ENCODE measurements at regions of chr4 and their contacts with region 1.

Region 1: GRCh38 chr4:175253184-175253902 is 335.2 kb downstream of the ADAM29 start:
- DNase-seq: peak in 1 of 2 experiments; percentile 9
- H3K4me3 ChIP-seq: no peak overlapping the region
- H3K4me3 Mint-ChIP-seq: no peak overlapping the region
- H3K27ac Mint-ChIP-seq: no peak overlapping the region
- H3K4me1 ChIP-seq: no peaks in the 10 kb centered on the region
- H3K4me1 Mint-ChIP-seq: no peaks in the 10 kb centered on the region
- H3K27me3 ChIP-seq: no peaks in the 10 kb centered on the region
- H3K27me3 Mint-ChIP-seq: no peaks in the 10 kb centered on the region
- CTCF ChIP-seq: peak in 1 of 2 experiments; percentile 32

Region 2: DNA sequence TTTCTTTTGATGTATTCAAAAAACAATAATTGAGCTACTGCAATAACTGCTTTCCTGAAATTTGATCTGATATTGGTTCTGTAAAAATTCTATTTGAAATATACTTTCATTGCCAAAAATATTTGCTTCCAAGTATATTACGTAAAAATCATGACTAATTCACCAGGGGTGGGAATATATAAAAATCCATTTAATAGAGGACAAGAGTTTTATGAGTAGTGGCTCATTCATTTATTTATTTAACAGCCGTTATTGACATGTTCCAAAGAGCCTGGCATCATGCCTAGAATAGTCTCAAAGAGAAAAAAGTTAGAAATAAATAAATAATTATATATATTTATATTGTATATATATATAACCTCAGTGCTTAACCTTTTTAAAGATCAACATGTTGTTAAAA is 458.6 kb before region 1 on chr4:
- CTCF ChIA-PET with region 1: no interaction called
- POLR2A ChIA-PET with region 1: no interaction called
- intact Hi-C with region 1: no loop called
- DNase-seq: no peak
- H3K4me3 ChIP-seq: no peak overlapping the region
- H3K4me3 Mint-ChIP-seq: no peak overlapping the region
- H3K27ac Mint-ChIP-seq: no peak overlapping the region
- H3K4me1 ChIP-seq: no peaks in the 10 kb centered on the region
- H3K4me1 Mint-ChIP-seq: no peaks in the 10 kb centered on the region
- H3K27me3 ChIP-seq: no peaks in the 10 kb centered on the region
- H3K27me3 Mint-ChIP-seq: no peaks in the 10 kb centered on the region
- CTCF ChIP-seq: no peak

Region 3: DNA sequence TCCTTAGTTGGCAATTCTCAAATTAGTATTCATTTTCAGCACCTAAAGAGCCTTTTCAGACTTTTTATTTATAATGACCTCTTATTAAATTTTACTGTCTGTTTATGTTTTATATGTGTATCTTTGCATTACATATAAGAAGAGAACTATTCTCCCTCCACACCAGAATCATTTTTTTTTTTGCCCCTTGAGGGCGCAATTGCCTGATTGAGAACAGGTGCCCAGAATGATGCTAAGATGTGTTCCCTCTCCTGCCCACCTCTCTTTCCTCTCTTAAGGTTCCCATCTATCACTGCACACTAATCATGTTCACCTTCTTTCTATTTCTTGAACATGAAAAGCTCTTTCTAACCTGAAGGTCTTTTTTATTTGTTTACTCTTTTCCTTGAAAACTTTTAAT is 379.4 kb before region 1 on chr4:
- CTCF ChIA-PET with region 1: no interaction called
- POLR2A ChIA-PET with region 1: no interaction called
- intact Hi-C with region 1: loop called (anchors 2 kb)
- DNase-seq: peak in 1 of 2 experiments; percentile 13
- H3K4me3 ChIP-seq: no peak overlapping the region
- H3K4me3 Mint-ChIP-seq: no peak overlapping the region
- H3K27ac Mint-ChIP-seq: no peak overlapping the region
- H3K4me1 ChIP-seq: peaks cover 21% of the 10 kb centered on the region
- H3K4me1 Mint-ChIP-seq: no peaks in the 10 kb centered on the region
- H3K27me3 ChIP-seq: no peaks in the 10 kb centered on the region
- H3K27me3 Mint-ChIP-seq: no peaks in the 10 kb centered on the region
- CTCF ChIP-seq: peak in 1 of 2 experiments; percentile 9